AG04450 (cell line): ENCODE measurements at regions of chr2 and their contacts with region 1.

Region 1: DNA sequence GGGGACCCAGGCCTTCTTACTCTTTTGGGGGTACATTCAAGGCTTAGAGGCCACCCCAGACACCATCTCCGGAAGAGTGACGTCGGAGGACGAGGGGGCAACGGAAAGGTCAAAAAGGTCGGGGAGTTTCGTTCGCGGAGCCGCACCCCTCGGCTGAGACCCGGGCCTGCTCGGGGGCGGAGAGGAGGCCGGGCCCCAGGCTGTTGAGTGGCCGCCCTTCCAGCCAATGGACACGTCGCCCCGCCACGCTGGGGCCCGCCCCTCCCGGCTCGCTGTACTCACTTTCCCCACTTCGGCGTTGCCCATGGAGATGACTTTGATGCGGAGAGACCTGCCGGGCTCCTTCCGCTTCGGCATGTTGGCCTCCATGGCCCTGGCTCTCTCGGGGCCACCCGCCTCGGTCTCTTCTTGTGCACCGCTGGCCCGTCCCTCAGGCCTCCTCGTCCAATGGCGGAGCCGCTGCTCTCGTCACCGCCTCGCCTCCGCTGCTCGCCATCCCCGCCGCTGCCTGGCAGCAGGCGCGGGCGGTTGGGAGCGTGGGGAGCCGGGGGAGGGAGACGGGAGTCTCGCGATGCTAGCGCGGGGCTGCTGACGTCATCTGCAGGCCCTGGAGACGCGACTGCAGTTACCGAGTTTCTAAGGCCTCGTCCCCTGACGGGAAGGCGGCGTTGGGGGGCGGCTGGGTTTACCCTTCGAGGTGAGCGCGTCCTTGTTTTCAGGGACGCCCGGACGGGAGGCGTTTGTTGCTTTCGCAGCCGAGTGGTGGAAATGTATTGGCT is at the start of gene DNAJC27:
- DNase-seq: peak; percentile 93
- H3K4me3 ChIP-seq: peak within 1 kb of the TSS; percentile 87
- H3K27ac ChIP-seq: peak within 1 kb of the TSS; percentile 97
- H3K27me3 ChIP-seq: no peaks in the 10 kb centered on the region
- CTCF ChIP-seq: no peak
- polyA plus RNA-seq, gene DNAJC27: 3.5 and 4.1 TPM in 2 replicates

Region 2: GRCh38 chr2:24943427-24944053 is 28.2 kb before region 1 on chr2:
- CTCF ChIA-PET with region 1: interaction called, 10 read pairs
- POLR2A ChIA-PET with region 1: no interaction called
- DNase-seq: no peak
- H3K4me3 ChIP-seq: no peak overlapping the region
- H3K27ac ChIP-seq: no peak overlapping the region
- H3K27me3 ChIP-seq: no peaks in the 10 kb centered on the region
- CTCF ChIP-seq: no peak

Region 3: GRCh38 chr2:25123682-25124081 is 152.0 kb after region 1 on chr2:
- CTCF ChIA-PET with region 1: interaction called, 229 read pairs
- POLR2A ChIA-PET with region 1: interaction called, 3 read pairs
- DNase-seq: no peak
- H3K4me3 ChIP-seq: no peak overlapping the region
- H3K27ac ChIP-seq: no peak overlapping the region
- H3K27me3 ChIP-seq: no peaks in the 10 kb centered on the region
- CTCF ChIP-seq: no peak

Region 4: GRCh38 chr2:25197336-25198208 is 225.8 kb after region 1 on chr2:
- CTCF ChIA-PET with region 1: interaction called, 90 read pairs
- POLR2A ChIA-PET with region 1: no interaction called
- DNase-seq: no peak
- H3K4me3 ChIP-seq: no peak overlapping the region
- H3K27ac ChIP-seq: no peak overlapping the region
- H3K27me3 ChIP-seq: no peaks in the 10 kb centered on the region
- CTCF ChIP-seq: no peak